ENCODE measurements at regions of chr3 and their contacts with region 1.

Region 1: GRCh38 chr3:88058591-88059368 is at the starts of genes CGGBP1 and ZNF654:
- DNase-seq: peak; percentile 99
- H3K4me3 Mint-ChIP-seq: peak within 1 kb of the TSS; percentile 95
- H3K27ac Mint-ChIP-seq: peak within 1 kb of the TSS; percentile 96
- H3K4me1 Mint-ChIP-seq: peaks cover 49% of the 10 kb centered on the region
- H3K27me3 Mint-ChIP-seq: no peaks in the 10 kb centered on the region
- total RNA-seq, gene CGGBP1: 90.5 and 95.0 TPM in 2 replicates
- total RNA-seq, gene ZNF654: 19.4 and 19.8 TPM in 2 replicates

Region 2: GRCh38 chr3:87227104-87227834 is 831.5 kb before region 1 on chr3 and contains the start of gene CHMP2B:
- intact Hi-C with region 1: loop called (anchors 2 kb)
- DNase-seq: peak; percentile 87
- H3K4me3 Mint-ChIP-seq: peak within 1 kb of the TSS; percentile 98
- H3K27ac Mint-ChIP-seq: peak within 1 kb of the TSS; percentile 94
- H3K4me1 Mint-ChIP-seq: peaks cover 31% of the 10 kb centered on the region
- H3K27me3 Mint-ChIP-seq: peaks cover 16% of the 10 kb centered on the region
- total RNA-seq, gene CHMP2B: 28.2 and 29.6 TPM in 2 replicates

Region 3: DNA sequence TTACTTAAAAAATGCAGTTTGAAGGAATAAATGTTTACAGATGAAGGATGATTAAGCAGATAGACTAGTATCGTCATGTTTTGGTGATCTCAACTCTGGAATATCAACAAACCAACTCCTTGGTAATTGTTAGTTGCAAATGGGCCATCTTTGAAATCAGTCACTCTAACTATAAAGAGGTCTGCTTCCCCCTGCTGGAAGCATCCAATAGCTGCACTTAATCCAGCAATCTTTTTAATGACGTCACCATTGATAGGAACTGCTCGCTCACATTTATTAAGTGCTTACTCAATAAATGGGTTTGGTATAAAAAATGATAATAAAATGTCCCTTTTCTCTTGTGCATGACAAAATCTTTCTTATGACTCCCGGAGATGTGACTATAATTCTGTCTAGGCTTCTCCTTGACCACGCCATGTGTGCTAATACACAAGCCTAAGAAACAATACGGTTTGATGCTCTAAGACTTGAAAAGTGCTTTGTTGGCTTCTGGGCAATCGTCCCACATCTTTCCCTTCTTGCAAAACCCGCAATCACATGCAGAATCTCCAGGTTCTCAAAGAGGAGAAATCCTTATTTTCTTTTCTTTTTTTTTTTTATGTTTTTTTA is 554.8 kb before region 1 on chr3:
- intact Hi-C with region 1: no loop called
- DNase-seq: no peak
- H3K4me3 Mint-ChIP-seq: no peak overlapping the region
- H3K27ac Mint-ChIP-seq: no peak overlapping the region
- H3K4me1 Mint-ChIP-seq: no peaks in the 10 kb centered on the region
- H3K27me3 Mint-ChIP-seq: no peaks in the 10 kb centered on the region

Region 4: GRCh38 chr3:87969620-87970019 is 89.2 kb before region 1 on chr3:
- intact Hi-C with region 1: no loop called
- DNase-seq: no peak
- H3K4me3 Mint-ChIP-seq: no peak overlapping the region
- H3K27ac Mint-ChIP-seq: no peak overlapping the region
- H3K4me1 Mint-ChIP-seq: no peaks in the 10 kb centered on the region
- H3K27me3 Mint-ChIP-seq: peaks cover 2% of the 10 kb centered on the region

Region 5: DNA sequence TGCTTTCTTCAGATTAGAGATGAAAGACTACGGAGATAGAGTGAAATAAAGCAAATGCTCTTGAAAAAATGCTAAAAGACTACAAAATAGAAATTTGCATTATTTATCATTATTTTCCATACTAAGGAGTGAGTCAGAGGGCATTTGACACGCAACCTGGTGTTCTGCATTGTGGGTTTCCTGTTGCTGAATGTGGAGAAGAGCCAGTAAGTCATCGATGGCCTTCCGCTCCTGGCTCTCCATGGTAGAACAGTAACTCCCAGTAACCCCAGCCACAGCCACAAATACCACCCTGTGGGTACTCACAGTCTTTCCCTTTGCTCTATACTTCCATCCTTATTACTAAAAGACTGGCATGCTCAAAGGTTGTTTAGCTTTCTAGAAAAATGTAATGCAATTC is 61.5 kb before region 1 on chr3:
- intact Hi-C with region 1: loop called (anchors 1 kb)
- DNase-seq: peak; percentile 31
- H3K4me3 Mint-ChIP-seq: peak overlapping the region; percentile 34
- H3K27ac Mint-ChIP-seq: peak overlapping the region; percentile 56
- H3K4me1 Mint-ChIP-seq: peaks cover 30% of the 10 kb centered on the region
- H3K27me3 Mint-ChIP-seq: peaks cover 13% of the 10 kb centered on the region

Region 6: DNA sequence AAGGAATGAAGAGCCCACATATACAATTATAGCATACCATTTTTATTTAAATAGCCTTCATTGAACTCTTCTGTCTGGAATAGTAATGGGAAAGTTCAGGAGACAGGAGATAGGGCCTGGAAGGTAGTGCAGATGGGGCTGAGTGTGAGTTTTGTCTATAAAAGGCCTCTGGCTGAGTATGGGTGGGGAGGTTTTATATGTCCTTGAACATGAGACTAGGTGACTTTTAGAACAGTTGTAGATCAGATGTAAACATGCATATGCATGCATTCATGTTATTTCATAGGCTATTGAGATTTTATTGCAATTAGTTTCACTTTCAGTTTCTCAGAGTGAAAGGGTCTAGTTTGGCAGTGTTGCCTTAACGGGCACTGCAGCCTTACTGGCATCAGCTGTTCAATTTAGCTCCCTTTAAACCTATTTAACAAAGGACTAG is 27.1 kb before region 1 on chr3:
- intact Hi-C with region 1: loop called (anchors 1 kb)
- DNase-seq: no peak
- H3K4me3 Mint-ChIP-seq: peak overlapping the region; percentile 86
- H3K27ac Mint-ChIP-seq: peak overlapping the region; percentile 71
- H3K4me1 Mint-ChIP-seq: peaks cover 39% of the 10 kb centered on the region
- H3K27me3 Mint-ChIP-seq: no peaks in the 10 kb centered on the region

Region 7: DNA sequence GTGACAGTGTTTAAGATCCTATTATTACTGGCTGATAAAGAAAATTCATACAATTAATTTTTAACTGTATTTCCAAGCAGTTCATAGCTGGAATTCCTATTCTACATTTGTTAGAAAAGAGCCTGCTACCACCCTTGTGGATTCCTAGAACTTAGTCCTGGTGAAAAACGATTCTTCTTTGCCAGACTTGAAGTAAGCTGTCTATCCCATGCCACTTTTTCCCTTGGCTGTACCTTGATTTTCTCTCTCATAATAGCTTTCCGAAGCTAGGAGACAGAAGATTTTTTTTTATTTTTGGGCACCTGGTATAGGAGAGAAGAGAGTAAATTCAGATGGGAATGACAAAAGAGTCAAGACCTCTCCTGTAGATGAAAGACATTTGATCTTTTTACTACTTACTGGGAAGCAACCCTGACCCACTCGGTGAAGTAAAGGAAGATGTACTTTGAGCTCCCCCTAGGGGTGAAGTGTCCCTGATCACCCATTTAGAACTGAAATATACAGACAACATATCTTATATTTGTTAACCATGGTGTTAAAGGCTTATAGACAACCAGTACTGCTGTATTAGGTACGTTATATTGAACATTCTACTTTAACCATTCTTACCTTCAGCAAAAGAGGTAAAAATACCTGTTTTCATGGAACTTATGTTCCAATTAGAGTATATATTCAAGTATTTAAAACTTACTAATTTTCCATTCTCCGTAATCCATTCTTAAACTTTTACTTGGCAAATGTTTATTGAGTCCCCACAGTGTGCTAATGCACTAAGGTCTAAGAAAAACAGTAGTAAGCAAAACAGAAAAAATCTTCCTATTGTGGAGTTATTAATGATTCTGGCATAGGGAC is 54.8 kb after region 1 on chr3:
- intact Hi-C with region 1: loop called (anchors 1 kb)
- DNase-seq: peak; percentile 44
- H3K4me3 Mint-ChIP-seq: no peak overlapping the region
- H3K27ac Mint-ChIP-seq: no peak overlapping the region
- H3K4me1 Mint-ChIP-seq: peaks cover 17% of the 10 kb centered on the region
- H3K27me3 Mint-ChIP-seq: no peaks in the 10 kb centered on the region

Region 8: DNA sequence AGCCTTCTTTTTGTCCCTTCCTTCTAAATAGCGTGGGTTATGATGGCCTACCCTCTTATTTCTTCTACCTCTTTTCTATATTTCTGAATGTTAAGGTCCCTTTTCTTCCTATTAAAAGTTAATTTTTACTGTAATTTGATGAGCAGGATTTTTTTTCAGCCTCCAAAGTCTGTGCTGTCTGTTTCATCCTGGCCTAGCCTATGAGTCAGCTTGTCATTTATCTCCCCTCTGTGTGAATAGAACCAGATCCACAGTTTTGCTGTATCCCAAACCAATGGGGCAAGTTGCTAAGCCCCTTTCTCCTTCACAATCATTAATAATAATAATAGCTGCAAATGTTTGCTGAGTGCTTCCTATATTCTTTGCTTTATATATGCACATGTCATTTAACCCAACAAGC is 72.9 kb after region 1 on chr3:
- intact Hi-C with region 1: no loop called
- DNase-seq: no peak
- H3K4me3 Mint-ChIP-seq: no peak overlapping the region
- H3K27ac Mint-ChIP-seq: no peak overlapping the region
- H3K4me1 Mint-ChIP-seq: peaks cover 10% of the 10 kb centered on the region
- H3K27me3 Mint-ChIP-seq: no peaks in the 10 kb centered on the region

Region 9: GRCh38 chr3:88180398-88180999 is 121.7 kb after region 1 on chr3:
- intact Hi-C with region 1: loop called (anchors 1 kb)
- DNase-seq: no peak
- H3K4me3 Mint-ChIP-seq: no peak overlapping the region
- H3K27ac Mint-ChIP-seq: no peak overlapping the region
- H3K4me1 Mint-ChIP-seq: no peaks in the 10 kb centered on the region
- H3K27me3 Mint-ChIP-seq: peaks cover 16% of the 10 kb centered on the region

Region 10: DNA sequence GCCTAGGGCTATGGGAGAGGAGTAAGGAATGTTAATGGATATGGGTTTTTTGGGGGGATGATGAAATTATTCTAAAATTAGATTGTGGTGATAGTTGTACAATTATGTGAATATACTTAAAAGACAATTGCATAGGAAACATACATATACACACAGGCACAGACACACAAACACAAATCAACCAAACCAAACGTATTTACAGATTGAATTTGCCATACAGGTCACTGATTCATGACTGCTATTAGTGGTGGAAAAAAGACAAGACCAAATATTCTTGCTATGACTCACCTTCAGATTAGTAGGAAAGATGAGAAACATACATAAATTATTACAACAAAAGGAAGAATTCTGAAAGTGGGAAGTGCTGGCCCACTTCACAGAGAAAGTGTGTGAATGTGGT is 176.3 kb after region 1 on chr3:
- intact Hi-C with region 1: no loop called
- DNase-seq: no peak
- H3K4me3 Mint-ChIP-seq: no peak overlapping the region
- H3K27ac Mint-ChIP-seq: no peak overlapping the region
- H3K4me1 Mint-ChIP-seq: no peaks in the 10 kb centered on the region
- H3K27me3 Mint-ChIP-seq: no peaks in the 10 kb centered on the region

Measured in activated T-helper 1 cell treated with anti-CD3 and anti-CD28 coated beads, Interleukin-12 subunit alpha, Interleukin-12 subunit beta, Interleukin-2, Interleukin-4 antibody, amounts not matched to agents 30 ng/mL and 10 ng/mL and 1 ng/mL, durations not matched to agents 14 hours and 24 hours and 36 hours (primary cell).